Vagina (tissue), 2 donors: ENCODE measurements at regions of chr2 and their contacts with region 1.

Region 1: DNA sequence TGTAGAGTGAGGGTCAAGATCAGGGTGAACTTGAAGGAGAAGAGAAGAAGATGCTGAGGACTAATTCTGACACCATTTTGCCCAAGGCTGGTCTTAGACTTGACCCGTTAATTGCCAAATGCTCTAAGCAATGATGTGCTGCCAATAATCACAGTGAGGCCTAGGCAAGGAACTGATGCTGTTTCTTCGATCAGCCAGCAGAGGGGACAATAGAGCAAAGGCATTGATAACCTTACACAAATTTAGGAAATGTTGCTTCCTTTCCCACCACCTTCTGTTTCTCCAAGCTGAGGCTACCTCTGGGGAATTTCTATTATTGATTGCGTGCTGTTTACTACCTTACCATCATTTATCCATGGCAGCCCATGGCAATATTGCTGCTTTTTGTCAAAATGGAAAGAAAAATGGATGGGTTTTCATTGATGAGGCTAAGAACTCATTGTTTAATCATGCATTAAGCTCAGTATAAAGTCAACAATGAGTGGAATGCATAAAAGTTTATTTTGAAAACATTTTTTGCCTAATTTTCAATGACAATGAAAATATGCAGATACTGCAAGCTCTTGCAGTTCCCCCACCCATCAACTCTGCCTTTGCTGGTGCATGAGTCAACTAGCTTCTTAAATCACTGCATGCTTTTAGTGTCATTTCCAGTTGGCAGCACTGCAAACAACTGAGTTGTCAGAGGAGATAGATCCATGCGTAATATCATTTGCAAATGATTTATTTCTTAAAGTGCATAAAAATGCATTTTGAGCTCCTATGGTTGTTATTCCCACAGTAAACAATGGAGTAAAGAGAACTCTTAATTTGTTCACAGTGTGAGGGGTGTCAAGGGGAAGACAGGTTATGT is 116.4 kb upstream of the NYAP2 start:
- DNase-seq: no peak
- H3K4me3 ChIP-seq: no peak overlapping the region
- H3K27ac ChIP-seq: no peak overlapping the region
- H3K4me1 ChIP-seq: no peaks in the 10 kb centered on the region
- H3K27me3 ChIP-seq: no peaks in the 10 kb centered on the region
- CTCF ChIP-seq: no peak
- POLR2A ChIP-seq: no peak

Region 2: GRCh38 chr2:225231900-225232299 is 51.2 kb before region 1 on chr2:
- intact Hi-C with region 1: loop called (anchors 2 kb)
- DNase-seq: no peak
- H3K4me3 ChIP-seq: no peak overlapping the region
- H3K27ac ChIP-seq: no peak overlapping the region
- H3K4me1 ChIP-seq: no peaks in the 10 kb centered on the region
- H3K27me3 ChIP-seq: no peaks in the 10 kb centered on the region
- CTCF ChIP-seq: no peak
- POLR2A ChIP-seq: no peak

Region 3: DNA sequence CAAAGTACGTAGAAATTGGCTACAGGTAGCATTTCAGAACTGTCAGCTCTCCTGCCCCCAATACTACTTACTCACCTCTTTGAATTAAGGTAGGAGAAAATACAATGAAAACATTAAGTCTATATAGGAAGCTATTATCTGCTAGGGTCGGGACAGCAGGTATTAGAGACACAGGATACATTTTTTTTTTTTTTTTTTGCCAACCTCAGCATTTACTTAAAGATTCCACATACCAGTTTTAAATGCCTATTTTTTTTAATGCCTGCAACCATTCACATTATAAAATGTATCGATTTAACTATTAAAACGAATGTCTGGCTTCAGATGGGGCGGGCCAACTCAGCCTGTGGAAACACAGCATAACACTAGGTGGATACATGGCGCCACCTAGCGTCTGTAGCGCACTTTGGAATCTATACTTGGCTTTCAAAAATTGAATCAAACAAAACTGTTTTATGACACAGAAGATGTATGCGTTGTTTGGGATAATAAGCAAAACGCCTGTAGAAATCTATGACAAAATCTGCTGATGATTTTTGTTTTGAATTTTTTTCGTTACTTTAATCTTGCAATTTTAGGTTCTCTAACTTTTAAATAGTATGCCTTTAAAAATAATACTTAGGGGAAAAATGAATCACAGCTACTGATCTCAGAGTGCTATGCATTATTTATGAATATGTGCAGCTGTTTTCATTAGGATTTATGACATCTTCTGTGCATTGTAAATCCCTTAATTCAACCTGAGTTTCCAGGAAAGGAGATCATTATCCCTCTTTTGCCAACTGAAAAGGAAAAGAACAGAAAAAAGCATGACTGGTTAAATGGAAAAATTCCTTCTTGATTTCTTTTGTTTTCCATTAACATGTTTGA is 377.4 kb after region 1 on chr2:
- intact Hi-C with region 1: no loop called
- DNase-seq: no peak
- H3K4me3 ChIP-seq: no peak overlapping the region
- H3K27ac ChIP-seq: no peak overlapping the region
- H3K4me1 ChIP-seq: no peaks in the 10 kb centered on the region
- H3K27me3 ChIP-seq: no peaks in the 10 kb centered on the region
- CTCF ChIP-seq: peak; percentile 54 to 59 (median 55)
- POLR2A ChIP-seq: no peak